ENCODE measurements at regions of chr3 and their contacts with region 1.

Region 1: DNA sequence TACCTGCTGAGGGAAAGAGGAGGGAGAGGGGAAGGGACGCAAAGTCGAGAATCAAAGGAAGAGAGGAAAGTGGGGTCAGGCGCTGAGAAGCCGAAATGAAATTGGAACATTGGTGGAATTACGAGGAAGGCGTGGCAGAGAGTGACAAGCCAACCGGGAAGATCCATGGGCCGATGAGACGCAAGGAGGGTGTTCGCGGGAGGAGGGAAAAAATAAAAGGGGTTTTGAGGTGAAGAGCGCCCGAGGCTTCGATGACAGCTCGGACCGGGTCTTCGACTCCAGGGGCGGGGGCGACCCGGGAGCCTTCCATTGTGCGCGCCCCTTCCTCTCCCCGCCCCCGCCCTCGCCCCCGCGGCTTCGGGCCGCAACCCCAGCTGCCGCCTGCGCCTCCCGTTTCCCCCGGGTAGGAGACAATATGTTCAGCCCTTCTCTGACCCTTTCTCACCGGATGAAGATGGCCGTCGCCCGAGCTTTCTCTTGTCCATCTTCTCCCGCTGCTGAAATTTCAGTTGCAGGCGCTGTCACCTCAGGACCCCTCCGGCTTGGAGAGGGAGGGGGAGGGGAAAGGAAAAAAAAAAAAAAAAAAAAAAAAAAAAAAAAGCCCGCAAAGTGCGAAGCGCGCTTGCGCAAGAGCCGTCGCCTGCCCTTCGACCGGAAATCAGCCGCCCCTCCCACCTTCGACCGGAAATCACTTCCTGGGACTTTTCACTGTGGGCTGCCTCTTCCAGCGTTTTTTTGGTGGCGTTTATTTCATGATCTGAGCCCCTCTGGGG is at the start of gene SENP7:
- DNase-seq: peak; percentile 63 to 82 (median 77)
- H3K4me3 ChIP-seq: peak within 1 kb of the TSS; percentile 79 to 99 (median 96)
- H3K27ac ChIP-seq: peak within 1 kb of the TSS; percentile 97 to 98
- H3K4me1 ChIP-seq: peaks cover 12 to 21% (median 13%) of the 10 kb centered on the region in 4 experiments
- H3K27me3 ChIP-seq: no peaks in the 10 kb centered on the region

Region 2: GRCh38 chr3:101561630-101562328 is 48.9 kb after region 1 on chr3 and contains the start of gene TRMT10C:
- CTCF ChIA-PET with region 1: interaction called, 3 read pairs
- POLR2A ChIA-PET with region 1: interaction called, 23 read pairs
- DNase-seq: peak; percentile 96 to 98 (median 98)
- H3K4me3 ChIP-seq: peak within 1 kb of the TSS; percentile 91 to 99 (median 94)
- H3K27ac ChIP-seq: peak within 1 kb of the TSS; percentile 87 to 92
- H3K4me1 ChIP-seq: peaks cover 3 to 20% (median 10%) of the 10 kb centered on the region in 4 experiments
- H3K27me3 ChIP-seq: peaks cover 0 to 6% (median 0%) of the 10 kb centered on the region in 5 experiments